ENCODE measurements at regions of chr11 and their contacts with region 1.

Region 1: GRCh38 chr11:47509077-47509536 is 43.8 kb downstream of the CELF1 start:
- DNase-seq: no peak
- ATAC-seq: no peak
- H3K4me3 ChIP-seq: no peak overlapping the region
- H3K27ac ChIP-seq: no peak overlapping the region
- H3K4me1 ChIP-seq: peaks cover 4 to 12% of the 10 kb centered on the region in 2 donors
- H3K27me3 ChIP-seq: no peaks in the 10 kb centered on the region

Region 2: DNA sequence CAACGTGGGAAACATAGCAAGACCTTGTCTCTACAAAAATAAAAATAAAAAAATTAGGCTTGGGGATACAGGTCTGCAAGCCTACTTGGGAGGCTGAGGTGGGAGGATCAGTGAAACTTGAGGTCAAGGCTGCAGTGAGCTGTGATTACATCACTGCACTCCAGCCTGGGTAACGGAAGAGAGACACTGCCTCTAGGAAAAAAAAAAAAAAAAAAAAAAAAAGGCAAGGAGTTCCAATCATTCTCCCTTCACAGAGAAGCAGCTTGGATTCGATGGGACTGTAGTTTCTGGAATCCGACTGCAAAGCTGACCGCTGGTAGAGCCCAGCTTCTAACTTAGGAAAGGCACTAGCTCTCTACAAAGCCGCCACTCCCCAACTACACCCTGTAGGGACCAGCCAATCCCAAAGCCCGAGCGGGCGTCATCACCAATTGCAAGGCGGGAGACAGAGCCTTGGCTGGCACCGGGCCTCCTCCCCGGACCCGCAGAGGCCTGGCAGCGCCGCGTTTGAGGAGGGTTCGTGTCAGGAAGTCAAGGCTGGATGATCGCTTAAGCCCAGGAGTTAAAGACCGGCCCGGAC is 295.0 kb before region 1 on chr11:
- intact Hi-C with region 1: no loop called
- DNase-seq: peak; percentile 97 to 98
- ATAC-seq: peak; percentile 95
- H3K4me3 ChIP-seq: peak overlapping the region; percentile 25 to 58
- H3K27ac ChIP-seq: peak overlapping the region; percentile 31 to 84
- H3K4me1 ChIP-seq: no peaks in the 10 kb centered on the region
- H3K27me3 ChIP-seq: no peaks in the 10 kb centered on the region

Region 3: DNA sequence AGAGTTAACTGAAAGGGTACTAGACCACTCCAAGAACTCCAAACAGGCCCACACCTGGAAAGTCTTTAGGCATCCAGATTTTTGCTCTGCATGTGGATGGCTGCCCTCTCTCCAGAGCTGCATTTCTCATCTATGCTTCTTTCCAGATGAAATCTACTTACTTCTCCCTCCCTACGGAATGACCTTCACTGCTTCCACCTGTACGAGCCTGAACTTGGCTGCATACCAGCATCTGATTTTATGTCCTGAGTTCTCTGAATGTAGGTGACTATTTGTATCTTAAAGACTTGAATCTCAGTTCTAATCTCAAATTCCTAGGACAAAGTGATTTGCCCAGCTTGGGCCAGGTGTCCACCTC is 30.6 kb after region 1 on chr11:
- intact Hi-C with region 1: loop called in 1 of 2 experiments (anchors 5 kb)
- DNase-seq: no peak
- ATAC-seq: no peak
- H3K4me3 ChIP-seq: no peak overlapping the region
- H3K27ac ChIP-seq: no peak overlapping the region
- H3K4me1 ChIP-seq: peaks cover 1 to 9% of the 10 kb centered on the region in 2 donors
- H3K27me3 ChIP-seq: no peaks in the 10 kb centered on the region

Region 4: GRCh38 chr11:47587723-47588326 is 78.7 kb after region 1 on chr11:
- intact Hi-C with region 1: no loop called
- DNase-seq: peak; percentile 80 to 90
- ATAC-seq: peak; percentile 61
- H3K4me3 ChIP-seq: no peak overlapping the region
- H3K27ac ChIP-seq: no peak overlapping the region
- H3K4me1 ChIP-seq: no peaks in the 10 kb centered on the region
- H3K27me3 ChIP-seq: no peaks in the 10 kb centered on the region